Thyroid gland (tissue), 4 donors: ENCODE measurements at regions of chr7 and their contacts with region 1.

Region 1: DNA sequence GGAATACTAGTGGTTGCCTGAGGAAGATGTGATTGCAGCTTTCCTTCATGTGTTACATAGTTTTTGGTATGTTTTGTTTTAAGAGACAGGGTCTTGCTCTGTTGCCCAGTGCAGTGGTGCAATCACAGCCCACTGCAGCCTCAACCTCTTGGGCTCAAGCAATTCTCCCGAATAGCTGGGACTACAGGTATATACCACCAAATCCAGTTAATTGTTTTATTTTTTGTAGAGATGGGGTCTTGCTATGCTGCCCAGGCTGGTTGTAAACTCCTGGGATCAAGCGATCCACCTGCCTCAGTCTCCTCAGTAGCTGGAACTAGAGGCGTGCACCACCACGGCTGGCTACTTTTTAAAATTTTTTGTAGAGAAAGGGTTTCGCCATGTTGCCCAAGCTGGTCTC is 79.1 kb upstream of the TMEM248 start:
- DNase-seq: no peak
- H3K4me3 ChIP-seq: no peak overlapping the region
- H3K27ac ChIP-seq: no peak overlapping the region
- H3K4me1 ChIP-seq: peaks cover 7 to 16% of the 10 kb centered on the region in 2 donors
- H3K27me3 ChIP-seq: no peaks in the 10 kb centered on the region
- CTCF ChIP-seq: no peak
- POLR2A ChIP-seq: no peak

Region 2: GRCh38 chr7:66920769-66921395 is 79.0 kb after region 1 on chr7 and contains the start of gene TMEM248:
- intact Hi-C with region 1: loop called (anchors 2 kb)
- DNase-seq: peak; percentile 88 to 89
- H3K4me3 ChIP-seq: peak within 1 kb of the TSS; percentile 78 to 90 (median 88)
- H3K27ac ChIP-seq: peak within 1 kb of the TSS in 2 of 3 donors; percentile 54 to 63
- H3K4me1 ChIP-seq: peaks cover 17 to 28% of the 10 kb centered on the region in 2 donors
- H3K27me3 ChIP-seq: no peaks in the 10 kb centered on the region
- CTCF ChIP-seq: no peak
- POLR2A ChIP-seq: peak in 1 of 2 donors; percentile 41
- total RNA-seq, gene TMEM248: 119 to 179 (median 144) TPM

Region 3: DNA sequence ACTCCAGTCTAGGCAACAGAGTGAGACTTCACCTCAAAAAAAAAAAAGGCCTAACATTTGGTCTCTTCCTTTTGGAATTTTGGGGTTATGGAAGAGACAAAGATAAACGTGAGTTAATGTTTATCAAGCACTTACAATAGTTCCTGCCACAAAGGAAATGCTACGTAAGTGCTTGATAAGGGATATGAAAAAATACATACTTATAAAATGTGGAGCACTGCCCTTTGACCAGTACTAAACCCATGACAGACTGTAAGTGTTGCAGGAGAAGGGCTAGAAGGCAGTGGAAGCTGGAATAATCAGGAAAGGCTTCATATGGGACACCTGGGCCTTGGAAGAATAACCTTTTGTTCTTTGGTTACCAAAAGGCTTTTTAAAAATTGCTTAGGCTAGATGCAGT is 104.6 kb after region 1 on chr7:
- intact Hi-C with region 1: no loop called
- DNase-seq: no peak
- H3K4me3 ChIP-seq: no peak overlapping the region
- H3K27ac ChIP-seq: no peak overlapping the region
- H3K4me1 ChIP-seq: no peaks in the 10 kb centered on the region
- H3K27me3 ChIP-seq: no peaks in the 10 kb centered on the region
- CTCF ChIP-seq: no peak
- POLR2A ChIP-seq: no peak

Region 4: GRCh38 chr7:67653856-67654454 is 812.1 kb after region 1 on chr7:
- intact Hi-C with region 1: no loop called
- DNase-seq: no peak
- H3K4me3 ChIP-seq: no peak overlapping the region
- H3K27ac ChIP-seq: no peak overlapping the region
- H3K4me1 ChIP-seq: peaks cover 9 to 37% of the 10 kb centered on the region in 2 donors
- H3K27me3 ChIP-seq: no peaks in the 10 kb centered on the region
- CTCF ChIP-seq: no peak
- POLR2A ChIP-seq: no peak